ENCODE measurements at regions of chr16 and their contacts with region 1.

Region 1: DNA sequence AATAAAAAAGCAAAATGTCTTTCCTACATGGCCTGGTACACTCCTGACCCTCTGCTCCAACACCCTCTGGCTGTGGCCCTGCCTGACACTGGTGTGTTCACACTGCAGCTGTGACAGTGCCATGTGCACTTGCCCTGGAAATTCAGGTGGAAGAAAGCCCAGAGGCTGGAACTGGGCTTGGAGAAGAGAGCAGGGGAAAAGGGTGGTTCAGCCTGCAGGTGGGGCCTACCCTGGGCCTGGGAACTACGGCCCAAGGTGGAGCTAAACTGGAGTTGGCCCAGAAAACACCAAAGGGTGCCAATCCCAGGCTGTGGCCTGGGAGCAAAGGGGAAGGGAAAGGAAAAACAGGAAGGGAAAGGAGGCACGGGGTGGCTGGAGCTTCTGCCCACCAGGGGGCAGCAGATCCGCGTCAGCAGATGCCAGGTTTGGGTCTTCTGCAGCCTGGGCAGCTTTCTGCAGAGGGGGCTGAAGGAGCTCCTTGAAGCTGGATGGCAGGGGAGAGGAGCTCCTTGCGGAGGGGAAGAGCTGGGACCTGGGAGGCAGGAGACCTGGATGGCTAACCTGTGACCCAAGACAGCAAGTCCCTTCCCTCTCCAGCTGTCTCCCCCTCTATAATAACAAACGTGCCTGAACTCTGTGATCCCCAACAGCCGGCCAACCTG is 15.4 kb upstream of the CTCF start:
- DNase-seq: peak; percentile 72
- ATAC-seq: peak; percentile 74
- H3K4me3 ChIP-seq: no peak overlapping the region
- H3K27ac ChIP-seq: no peak overlapping the region
- H3K4me1 ChIP-seq: peaks cover under 1% of the 10 kb centered on the region; the same call in 1 of the 2 replicates
- H3K27me3 ChIP-seq: no peaks in the 10 kb centered on the region
- CTCF ChIP-seq: peak; percentile 81

Region 2: DNA sequence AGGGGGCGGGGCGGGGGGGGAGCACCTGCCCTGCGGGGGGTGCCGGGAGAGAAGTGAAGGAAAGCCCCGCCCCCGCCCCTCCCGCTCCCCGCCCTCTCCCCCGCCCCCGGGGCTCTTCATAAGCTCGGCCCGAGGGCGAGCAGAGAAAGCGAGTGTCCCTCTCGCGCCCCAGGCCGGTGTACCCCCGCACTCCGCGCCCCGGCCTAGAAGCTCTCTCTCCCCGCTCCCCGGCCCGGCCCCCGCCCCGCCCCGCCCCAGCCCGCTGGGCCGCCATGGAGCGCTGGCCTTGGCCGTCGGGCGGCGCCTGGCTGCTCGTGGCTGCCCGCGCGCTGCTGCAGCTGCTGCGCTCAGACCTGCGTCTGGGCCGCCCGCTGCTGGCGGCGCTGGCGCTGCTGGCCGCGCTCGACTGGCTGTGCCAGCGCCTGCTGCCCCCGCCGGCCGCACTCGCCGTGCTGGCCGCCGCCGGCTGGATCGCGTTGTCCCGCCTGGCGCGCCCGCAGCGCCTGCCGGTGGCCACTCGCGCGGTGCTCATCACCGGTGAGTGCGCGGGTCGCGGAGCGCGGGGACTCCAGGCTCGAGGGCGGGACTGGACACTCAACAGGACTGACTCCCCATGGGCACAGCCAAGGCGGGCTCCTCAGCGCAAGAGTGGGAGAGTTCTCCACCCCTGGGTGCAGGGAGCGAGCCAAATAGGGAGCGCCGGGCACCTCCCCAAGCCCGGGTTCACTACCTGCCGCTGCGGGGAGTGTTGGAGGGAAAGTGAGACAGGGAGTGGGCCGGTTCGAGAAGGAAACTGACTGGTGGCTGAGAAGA is 115.7 kb before region 1 on chr16 and contains the start of gene HSD11B2:
- CTCF ChIA-PET with region 1: no interaction called
- POLR2A ChIA-PET with region 1: interaction called, 11 read pairs
- intact Hi-C with region 1: no loop called
- DNase-seq: peak; percentile 59
- ATAC-seq: peak; percentile 71
- H3K4me3 ChIP-seq: peak within 1 kb of the TSS; percentile 68
- H3K27ac ChIP-seq: no peak within 1 kb of the TSS
- H3K4me1 ChIP-seq: peaks cover 3% of the 10 kb centered on the region
- H3K27me3 ChIP-seq: no peaks in the 10 kb centered on the region
- CTCF ChIP-seq: no peak
- total RNA-seq, gene HSD11B2: 2.4 and 8.3 TPM in 2 replicates